HepG2 (cell line): ENCODE measurements at regions of chr1 and their contacts with region 1.

Region 1: GRCh38 chr1:37978541-37978940 is 11.3 kb downstream of the SF3A3 start:
- DNase-seq: no peak
- ATAC-seq: no peak
- H3K4me3 ChIP-seq: no peak overlapping the region
- H3K27ac ChIP-seq: no peak overlapping the region
- H3K4me1 ChIP-seq: no peaks in the 10 kb centered on the region
- H3K27me3 ChIP-seq: no peaks in the 10 kb centered on the region
- CTCF ChIP-seq: no peak
- EP300 ChIP-seq: no peak
- POLR2A ChIP-seq: no peak
- RAD21 ChIP-seq: no peak

Region 2: DNA sequence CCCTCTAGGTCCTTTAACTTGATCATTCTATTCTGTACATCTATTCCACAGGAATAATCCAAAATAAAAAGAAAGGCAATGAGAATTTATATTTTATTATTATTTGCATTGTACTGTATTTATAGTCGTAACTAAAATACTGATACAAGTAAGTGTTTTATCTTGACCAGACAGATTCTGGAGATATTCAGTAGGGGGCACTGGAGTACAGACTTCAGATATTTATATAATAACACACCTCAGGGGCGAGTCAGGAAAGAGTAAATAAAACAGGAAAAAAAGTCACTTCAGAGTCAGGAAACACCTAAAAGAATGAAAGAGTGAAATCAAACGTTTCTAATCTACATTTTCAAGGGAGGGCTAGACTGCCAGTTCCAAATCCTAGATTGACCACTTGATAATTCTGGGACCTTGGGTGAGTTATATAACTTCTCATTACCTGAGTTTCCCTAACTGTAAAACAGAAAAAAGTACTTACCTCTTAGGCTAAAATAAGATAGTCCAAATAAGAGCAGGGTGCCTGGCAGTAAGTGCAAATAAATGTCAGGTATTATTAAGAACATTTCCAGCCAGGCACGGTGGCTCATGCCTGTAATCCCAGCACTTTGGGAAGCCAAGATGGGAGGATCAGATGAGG is 88.0 kb before region 1 on chr1:
- CTCF ChIA-PET with region 1: interaction called, 23 read pairs
- POLR2A ChIA-PET with region 1: no interaction called
- in situ Hi-C with region 1: loop called (anchors 5 kb)
- intact Hi-C with region 1: loop called (anchors 1 kb)
- DNase-seq: peak; percentile 75
- ATAC-seq: peak; percentile 55; the same call in 2 of the 3 replicates
- H3K4me3 ChIP-seq: no peak overlapping the region
- H3K27ac ChIP-seq: no peak overlapping the region
- H3K4me1 ChIP-seq: peaks cover 6% of the 10 kb centered on the region; the same call in 1 of the 2 replicates
- H3K27me3 ChIP-seq: no peaks in the 10 kb centered on the region
- CTCF ChIP-seq: peak; percentile 59
- EP300 ChIP-seq: no peak
- POLR2A ChIP-seq: no peak
- RAD21 ChIP-seq: peak; percentile 48

Region 3: GRCh38 chr1:37919277-37919676 is 59.3 kb before region 1 on chr1:
- CTCF ChIA-PET with region 1: interaction called, 8 read pairs
- POLR2A ChIA-PET with region 1: no interaction called
- in situ Hi-C with region 1: no loop called
- intact Hi-C with region 1: loop called (anchors 1 kb)
- DNase-seq: peak; percentile 34
- ATAC-seq: peak; percentile 86
- H3K4me3 ChIP-seq: no peak overlapping the region
- H3K27ac ChIP-seq: no peak overlapping the region
- H3K4me1 ChIP-seq: peaks cover 18% of the 10 kb centered on the region
- H3K27me3 ChIP-seq: no peaks in the 10 kb centered on the region
- CTCF ChIP-seq: peak; percentile 36
- EP300 ChIP-seq: no peak
- POLR2A ChIP-seq: no peak
- RAD21 ChIP-seq: peak; percentile 41; the same call in 1 of the 2 replicates